Mammary epithelial cell (primary cell): ENCODE measurements at regions of chr6 and their contacts with region 1.

Region 1: DNA sequence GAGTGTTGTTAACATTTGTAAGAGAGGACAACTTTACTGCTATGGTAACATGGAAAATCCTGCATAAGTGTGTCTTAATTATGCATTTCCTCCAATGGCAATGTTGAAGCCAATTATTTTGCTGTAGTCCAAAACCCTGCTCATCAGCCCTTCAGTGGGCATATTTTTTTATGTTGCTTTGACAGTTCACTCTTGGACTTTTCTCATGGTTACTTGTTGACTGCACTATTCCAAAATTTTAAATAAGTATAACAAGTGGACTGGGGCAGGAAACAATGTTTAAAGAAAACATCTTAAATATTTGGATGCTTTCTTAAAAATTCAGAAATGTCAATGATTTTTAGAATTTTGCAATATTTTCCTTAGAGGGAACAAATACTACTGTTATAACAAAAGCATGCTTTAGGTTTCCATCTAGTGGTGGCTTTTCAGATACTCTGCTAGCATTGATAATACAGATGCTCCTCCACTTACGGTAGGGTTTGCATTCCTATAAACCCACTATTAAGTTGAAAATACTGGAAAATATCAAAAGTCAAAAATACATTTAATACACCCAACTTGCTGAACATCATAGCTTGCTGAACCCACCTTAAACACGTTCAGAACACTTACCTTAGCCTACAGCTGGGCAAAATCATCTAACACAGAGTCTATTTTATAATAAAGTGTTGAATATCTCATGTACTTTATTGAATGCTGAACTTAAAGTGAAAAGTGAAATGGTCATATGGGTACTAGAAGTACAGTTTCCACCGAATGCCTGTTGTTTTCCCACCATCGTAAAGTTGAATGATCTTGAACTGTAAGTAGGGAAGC is 86.4 kb downstream of the ADGRG6 start:
- DNase-seq: peak; percentile 16
- H3K4me3 ChIP-seq: no peak overlapping the region
- H3K27ac ChIP-seq: no peak overlapping the region
- H3K4me1 ChIP-seq: no peaks in the 10 kb centered on the region
- H3K27me3 ChIP-seq: no peaks in the 10 kb centered on the region
- CTCF ChIP-seq: peak; percentile 70 to 71

Region 2: GRCh38 chr6:142207265-142207877 is 180.8 kb before region 1 on chr6:
- CTCF ChIA-PET with region 1: no interaction called
- dilution Hi-C with region 1: no loop called
- in situ Hi-C with region 1: no loop called
- intact Hi-C with region 1: loop called (anchors 2 kb)
- DNase-seq: peak; percentile 32
- H3K4me3 ChIP-seq: no peak overlapping the region
- H3K27ac ChIP-seq: no peak overlapping the region
- H3K4me1 ChIP-seq: no peaks in the 10 kb centered on the region
- H3K27me3 ChIP-seq: no peaks in the 10 kb centered on the region
- CTCF ChIP-seq: peak; percentile 82 to 92